B cell (primary cell): ENCODE measurements at regions of chr10 and their contacts with region 1.

Region 1: DNA sequence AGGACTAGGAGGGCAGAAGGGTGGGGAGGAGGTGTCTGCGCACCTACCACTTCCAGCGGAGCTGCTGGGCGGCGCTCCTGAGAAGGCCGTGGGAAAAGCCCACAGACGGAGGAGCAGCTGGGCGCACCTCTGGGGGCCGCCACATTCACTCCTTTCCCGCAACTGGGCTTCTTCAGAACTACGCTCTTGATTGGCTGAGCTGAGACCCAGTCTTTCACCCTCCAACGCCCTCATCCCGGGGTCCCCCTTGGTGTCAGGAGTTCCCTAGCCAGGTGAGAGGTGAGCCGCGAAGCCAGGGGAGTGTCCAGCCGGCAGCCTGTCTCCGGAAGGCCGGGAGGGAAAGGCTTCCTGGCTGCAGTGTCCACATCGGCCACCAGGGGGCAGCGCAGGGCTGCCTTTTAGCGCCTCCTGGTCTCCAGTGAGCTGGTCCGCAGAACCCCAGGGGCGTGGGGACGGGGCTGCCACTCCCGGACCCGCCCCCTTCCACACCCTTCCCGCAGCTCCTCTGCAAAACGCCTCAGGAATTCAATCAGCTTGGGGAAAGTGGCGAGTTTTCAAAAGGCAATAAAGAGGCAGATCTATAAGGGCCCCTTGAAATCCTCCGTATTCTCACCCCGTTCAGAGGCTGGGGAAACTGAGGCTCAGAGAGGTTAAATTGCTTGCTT is 98.8 kb downstream of the CHST15 start:
- DNase-seq: peak; percentile 87
- ATAC-seq: peak; percentile 82
- H3K4me3 ChIP-seq: peak overlapping the region; percentile 2 to 65 (median 30)
- H3K4me3 Mint-ChIP-seq: peak overlapping the region; percentile 84
- H3K27ac ChIP-seq: no peak overlapping the region
- H3K27ac Mint-ChIP-seq: peak overlapping the region; percentile 55
- H3K4me1 ChIP-seq: peaks cover 29 to 36% of the 10 kb centered on the region in 2 donors
- H3K4me1 Mint-ChIP-seq: peaks cover 40% of the 10 kb centered on the region
- H3K27me3 ChIP-seq: peaks cover 0 to 34% (median 20%) of the 10 kb centered on the region in 4 experiments
- H3K27me3 Mint-ChIP-seq: peaks cover 38% of the 10 kb centered on the region
- CTCF ChIP-seq: peak; percentile 99

Region 2: GRCh38 chr10:123496375-123496774 is 498.2 kb before region 1 on chr10:
- CTCF ChIA-PET with region 1: no interaction called
- POLR2A ChIA-PET with region 1: no interaction called
- intact Hi-C with region 1: no loop called
- DNase-seq: no peak
- ATAC-seq: no peak
- H3K4me3 ChIP-seq: no peak overlapping the region
- H3K4me3 Mint-ChIP-seq: no peak overlapping the region
- H3K27ac ChIP-seq: no peak overlapping the region
- H3K27ac Mint-ChIP-seq: no peak overlapping the region
- H3K4me1 ChIP-seq: no peaks in the 10 kb centered on the region
- H3K4me1 Mint-ChIP-seq: no peaks in the 10 kb centered on the region
- H3K27me3 ChIP-seq: no peaks in the 10 kb centered on the region
- H3K27me3 Mint-ChIP-seq: peaks cover 11% of the 10 kb centered on the region
- CTCF ChIP-seq: no peak

Region 3: DNA sequence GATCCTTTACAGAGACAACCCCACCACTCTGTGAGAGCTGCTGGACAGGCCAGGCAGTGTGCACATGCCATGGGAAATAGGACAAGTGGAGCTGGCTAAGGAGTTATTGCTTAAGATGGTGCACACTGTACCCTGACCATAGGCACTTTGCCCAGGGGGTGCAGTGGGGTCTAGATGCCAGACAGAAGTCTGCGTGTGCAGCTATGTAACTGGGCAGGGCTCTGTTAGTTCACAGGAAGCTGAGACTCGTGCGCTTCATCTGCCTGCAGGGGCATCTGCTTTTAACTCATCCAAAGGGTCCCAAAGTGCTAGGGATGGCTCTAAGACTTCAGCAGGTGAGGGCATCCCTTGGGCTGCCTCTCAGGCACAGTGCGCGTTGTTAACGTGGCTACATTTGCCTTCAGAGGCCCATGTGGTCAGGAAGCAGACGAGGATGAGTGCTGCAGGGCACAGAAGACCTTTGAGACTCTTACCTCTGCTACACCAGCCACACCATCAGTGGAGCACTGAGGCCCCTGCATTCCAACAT is 406.1 kb before region 1 on chr10:
- CTCF ChIA-PET with region 1: no interaction called
- POLR2A ChIA-PET with region 1: no interaction called
- intact Hi-C with region 1: no loop called
- DNase-seq: no peak
- ATAC-seq: no peak
- H3K4me3 ChIP-seq: no peak overlapping the region
- H3K4me3 Mint-ChIP-seq: no peak overlapping the region
- H3K27ac ChIP-seq: no peak overlapping the region
- H3K27ac Mint-ChIP-seq: no peak overlapping the region
- H3K4me1 ChIP-seq: no peaks in the 10 kb centered on the region
- H3K4me1 Mint-ChIP-seq: no peaks in the 10 kb centered on the region
- H3K27me3 ChIP-seq: peaks cover 0 to 18% (median 3%) of the 10 kb centered on the region in 4 experiments
- H3K27me3 Mint-ChIP-seq: peaks cover 40% of the 10 kb centered on the region
- CTCF ChIP-seq: no peak

Region 4: DNA sequence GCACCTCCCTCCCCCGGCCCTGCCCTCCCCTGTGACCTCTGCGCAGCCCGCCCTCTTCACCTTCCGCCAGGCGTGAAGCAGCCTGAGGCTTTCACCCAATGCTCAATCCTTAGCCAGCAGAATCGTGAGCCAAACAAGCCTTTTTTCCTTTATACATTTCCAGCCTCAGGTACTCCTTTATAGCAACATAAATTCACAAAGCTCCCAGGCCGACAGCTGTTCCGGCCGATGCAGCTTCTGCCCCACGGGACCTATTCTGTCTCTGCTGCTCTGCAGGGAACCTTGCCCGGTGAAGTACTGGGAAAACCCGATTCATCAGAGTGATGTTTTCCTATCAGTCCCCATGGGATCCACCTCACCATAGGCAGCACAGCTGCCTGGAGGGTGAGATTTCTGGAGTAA is 11.4 kb after region 1 on chr10:
- CTCF ChIA-PET with region 1: interaction called, 14 read pairs
- POLR2A ChIA-PET with region 1: interaction called, 3 read pairs
- intact Hi-C with region 1: no loop called
- DNase-seq: no peak
- ATAC-seq: no peak
- H3K4me3 ChIP-seq: no peak overlapping the region
- H3K4me3 Mint-ChIP-seq: no peak overlapping the region
- H3K27ac ChIP-seq: no peak overlapping the region
- H3K27ac Mint-ChIP-seq: no peak overlapping the region
- H3K4me1 ChIP-seq: no peaks in the 10 kb centered on the region
- H3K4me1 Mint-ChIP-seq: no peaks in the 10 kb centered on the region
- H3K27me3 ChIP-seq: no peaks in the 10 kb centered on the region
- H3K27me3 Mint-ChIP-seq: no peaks in the 10 kb centered on the region
- CTCF ChIP-seq: no peak

Region 5: GRCh38 chr10:124092860-124093773 is 98.6 kb after region 1 on chr10 and contains the start of gene CHST15:
- CTCF ChIA-PET with region 1: interaction called, 58 read pairs
- POLR2A ChIA-PET with region 1: interaction called, 4 read pairs
- intact Hi-C with region 1: loop called (anchors 1 kb)
- DNase-seq: peak; percentile 82
- ATAC-seq: peak; percentile 39
- H3K4me3 ChIP-seq: peak within 1 kb of the TSS; percentile 58 to 85 (median 80)
- H3K4me3 Mint-ChIP-seq: peak within 1 kb of the TSS; percentile 98
- H3K27ac ChIP-seq: peak within 1 kb of the TSS; percentile 71 to 97
- H3K27ac Mint-ChIP-seq: peak within 1 kb of the TSS; percentile 90
- H3K4me1 ChIP-seq: peaks cover 29 to 33% of the 10 kb centered on the region in 2 donors
- H3K4me1 Mint-ChIP-seq: peaks cover 57% of the 10 kb centered on the region
- H3K27me3 ChIP-seq: no peaks in the 10 kb centered on the region
- H3K27me3 Mint-ChIP-seq: no peaks in the 10 kb centered on the region
- CTCF ChIP-seq: no peak
- total RNA-seq, gene CHST15: 72.0 and 75.4 TPM in 2 replicates

Region 6: DNA sequence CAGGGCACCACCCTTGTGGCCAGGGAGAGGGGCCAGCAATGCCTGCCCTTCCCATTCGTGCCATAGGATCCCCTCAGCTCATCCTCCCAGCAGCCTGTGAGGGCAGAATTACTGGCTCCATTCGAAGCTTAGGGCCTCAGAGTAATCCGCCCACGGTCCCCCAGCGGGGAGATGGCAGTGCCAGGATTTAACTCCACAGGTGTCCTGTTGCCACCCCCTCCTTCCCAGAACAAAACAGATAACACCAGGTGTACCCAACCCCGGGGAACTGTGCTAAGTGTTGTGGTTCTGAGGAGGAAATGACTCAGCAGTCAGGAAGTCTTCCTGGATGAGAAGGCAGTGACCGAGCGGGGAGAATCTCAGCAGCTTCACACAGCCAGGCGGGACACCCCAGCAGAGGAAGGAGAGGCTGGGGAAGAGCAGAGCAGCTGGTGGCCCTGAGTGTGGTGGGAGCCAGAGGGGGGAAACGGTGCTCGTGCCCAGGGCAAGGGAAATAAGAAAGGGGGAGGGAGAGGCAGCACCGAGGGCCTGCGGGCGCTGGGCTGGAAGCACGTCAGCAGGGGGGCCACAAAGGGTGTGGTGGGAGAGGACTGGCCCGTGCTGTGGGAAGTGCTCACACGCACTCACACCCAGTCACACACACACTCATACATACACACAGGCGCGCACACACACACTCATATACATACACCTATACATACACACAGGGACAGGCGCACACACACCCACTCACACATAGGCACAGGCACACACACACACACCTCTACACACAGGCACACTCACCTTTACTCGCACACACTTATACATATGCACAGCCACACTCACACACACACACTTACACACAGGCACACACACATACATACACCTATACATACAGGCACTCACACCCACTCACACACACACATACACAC is 158.6 kb after region 1 on chr10:
- CTCF ChIA-PET with region 1: interaction called, 31 read pairs
- POLR2A ChIA-PET with region 1: no interaction called
- intact Hi-C with region 1: loop called (anchors 1 kb)
- DNase-seq: peak; percentile 56
- ATAC-seq: peak; percentile 59
- H3K4me3 ChIP-seq: peak overlapping the region in 2 of 5 experiments; percentile 25 to 34
- H3K4me3 Mint-ChIP-seq: no peak overlapping the region
- H3K27ac ChIP-seq: no peak overlapping the region
- H3K27ac Mint-ChIP-seq: no peak overlapping the region
- H3K4me1 ChIP-seq: peaks cover 30 to 34% of the 10 kb centered on the region in 2 donors
- H3K4me1 Mint-ChIP-seq: peaks cover 15% of the 10 kb centered on the region
- H3K27me3 ChIP-seq: no peaks in the 10 kb centered on the region
- H3K27me3 Mint-ChIP-seq: no peaks in the 10 kb centered on the region
- CTCF ChIP-seq: no peak

Region 7: GRCh38 chr10:124250506-124250905 is 256.0 kb after region 1 on chr10:
- CTCF ChIA-PET with region 1: interaction called, 10 read pairs
- POLR2A ChIA-PET with region 1: no interaction called
- intact Hi-C with region 1: no loop called
- DNase-seq: no peak
- ATAC-seq: no peak
- H3K4me3 ChIP-seq: no peak overlapping the region
- H3K4me3 Mint-ChIP-seq: no peak overlapping the region
- H3K27ac ChIP-seq: no peak overlapping the region
- H3K27ac Mint-ChIP-seq: no peak overlapping the region
- H3K4me1 ChIP-seq: peaks cover 10 to 11% of the 10 kb centered on the region in 2 donors
- H3K4me1 Mint-ChIP-seq: peaks cover 26% of the 10 kb centered on the region
- H3K27me3 ChIP-seq: peaks cover 0 to 7% (median 0%) of the 10 kb centered on the region in 4 experiments
- H3K27me3 Mint-ChIP-seq: peaks cover 3% of the 10 kb centered on the region
- CTCF ChIP-seq: no peak

Region 8: GRCh38 chr10:124403548-124403947 is 409.0 kb after region 1 on chr10:
- CTCF ChIA-PET with region 1: interaction called, 365 read pairs
- POLR2A ChIA-PET with region 1: interaction called, 3 read pairs
- intact Hi-C with region 1: loop called (anchors 1 kb)
- DNase-seq: peak; percentile 83
- ATAC-seq: peak; percentile 99
- H3K4me3 ChIP-seq: no peak overlapping the region
- H3K4me3 Mint-ChIP-seq: no peak overlapping the region
- H3K27ac ChIP-seq: no peak overlapping the region
- H3K27ac Mint-ChIP-seq: peak overlapping the region; percentile 66
- H3K4me1 ChIP-seq: peaks cover 5 to 9% of the 10 kb centered on the region in 2 donors
- H3K4me1 Mint-ChIP-seq: peaks cover 9% of the 10 kb centered on the region
- H3K27me3 ChIP-seq: no peaks in the 10 kb centered on the region
- H3K27me3 Mint-ChIP-seq: no peaks in the 10 kb centered on the region
- CTCF ChIP-seq: peak; percentile 74